H1 (cell line): ENCODE measurements at regions of chr6 and their contacts with region 1.

Region 1: DNA sequence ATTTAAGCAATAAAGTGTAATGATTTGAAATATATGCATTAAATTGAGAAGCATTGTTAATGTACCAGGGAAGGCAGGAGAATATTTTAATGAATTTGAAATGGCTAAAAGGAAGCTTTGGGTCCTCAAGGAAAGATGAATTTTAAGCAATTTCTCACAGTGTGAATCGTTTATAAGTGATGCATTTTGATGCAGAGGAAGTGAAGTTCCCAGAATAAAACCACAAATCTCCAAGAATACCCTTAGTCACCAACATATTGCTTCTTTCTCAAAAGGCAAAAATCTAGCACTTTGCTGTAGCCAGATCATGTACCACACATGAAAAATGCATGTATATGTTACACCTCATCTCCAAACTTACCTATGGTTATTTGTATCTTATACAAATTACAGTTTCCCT is 11.7 kb downstream of the TPD52L1 start:
- DNase-seq: no peak
- H3K4me3 ChIP-seq: no peak overlapping the region
- H3K27ac ChIP-seq: no peak overlapping the region
- H3K4me1 ChIP-seq: no peaks in the 10 kb centered on the region
- H3K27me3 ChIP-seq: no peaks in the 10 kb centered on the region
- CTCF ChIP-seq: no peak
- EP300 ChIP-seq: no peak
- POLR2A ChIP-seq: no peak
- RAD21 ChIP-seq: no peak

Region 2: DNA sequence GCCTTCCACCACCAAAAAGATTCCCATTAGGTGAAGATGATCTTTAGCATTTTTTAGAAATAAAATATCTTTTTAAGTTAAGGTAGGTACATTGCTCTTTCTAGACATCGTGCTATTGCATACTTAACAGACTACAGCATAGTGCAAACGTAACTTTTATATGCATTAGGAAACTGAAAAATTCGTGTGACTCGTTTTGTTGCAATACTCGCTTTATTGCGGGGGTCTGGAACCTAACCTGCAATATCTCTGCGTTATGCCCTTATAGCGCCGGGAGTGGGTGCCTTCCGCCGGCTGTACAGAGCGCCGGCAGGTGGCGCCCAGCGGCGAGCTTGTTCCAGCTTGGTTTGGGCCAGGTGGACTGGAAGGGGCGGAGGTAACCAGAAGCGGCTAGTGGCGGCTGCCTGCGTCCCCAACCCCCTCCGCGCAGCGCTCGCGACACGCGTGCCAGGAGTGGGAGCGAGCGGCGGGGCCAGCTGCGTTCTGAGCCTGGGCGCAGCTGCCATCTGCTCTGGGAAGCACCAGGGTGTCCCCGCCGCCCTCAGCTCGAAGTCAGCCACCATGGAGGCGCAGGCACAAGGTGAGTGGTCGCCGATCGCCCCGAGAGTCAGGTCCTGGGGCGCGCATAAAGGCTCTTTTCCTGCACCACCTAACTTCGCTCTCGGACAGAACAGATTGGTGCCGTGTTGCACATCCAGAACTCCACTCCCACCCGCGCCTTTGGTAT is 11.7 kb before region 1 on chr6 and contains the start of gene TPD52L1:
- CTCF ChIA-PET with region 1: interaction called, 28 read pairs
- POLR2A ChIA-PET with region 1: no interaction called
- DNase-seq: peak; percentile 47 to 86
- H3K4me3 ChIP-seq: peak within 1 kb of the TSS; percentile 54 to 85 (median 66)
- H3K27ac ChIP-seq: no peak within 1 kb of the TSS
- H3K4me1 ChIP-seq: peaks cover 0 to 3% (median 1%) of the 10 kb centered on the region in 4 experiments; a peak in 2 of 7 replicates
- H3K27me3 ChIP-seq: peaks cover 0 to 23% (median 14%) of the 10 kb centered on the region in 4 experiments; a peak in 6 of 7 replicates
- CTCF ChIP-seq: peak; percentile 83 to 90 (median 84)
- EP300 ChIP-seq: no peak
- POLR2A ChIP-seq: no peak; a peak in 1 of 3 replicates
- RAD21 ChIP-seq: peak; percentile 71 to 78
- total RNA-seq, gene TPD52L1: 7.4 and 9.6 TPM in 2 replicates